CD8-positive, alpha-beta T cell (primary cell): ENCODE measurements at regions of chr9 and their contacts with region 1.

Region 1: GRCh38 chr9:91150998-91151717 is 210.6 kb downstream of the AUH start:
- DNase-seq: peak in 4 of 9 experiments; percentile 37 to 92 (median 66)
- ATAC-seq: peak; percentile 92
- H3K4me3 ChIP-seq: no peak overlapping the region
- H3K4me3 Mint-ChIP-seq: peak overlapping the region; percentile 23
- H3K27ac ChIP-seq: peak overlapping the region in 1 of 2 experiments; percentile 73
- H3K27ac Mint-ChIP-seq: peak overlapping the region; percentile 56
- H3K4me1 ChIP-seq: peaks cover 31% of the 10 kb centered on the region
- H3K4me1 Mint-ChIP-seq: peaks cover 48% of the 10 kb centered on the region
- H3K27me3 ChIP-seq: no peaks in the 10 kb centered on the region
- H3K27me3 Mint-ChIP-seq: no peaks in the 10 kb centered on the region
- CTCF ChIP-seq: no peak

Region 2: DNA sequence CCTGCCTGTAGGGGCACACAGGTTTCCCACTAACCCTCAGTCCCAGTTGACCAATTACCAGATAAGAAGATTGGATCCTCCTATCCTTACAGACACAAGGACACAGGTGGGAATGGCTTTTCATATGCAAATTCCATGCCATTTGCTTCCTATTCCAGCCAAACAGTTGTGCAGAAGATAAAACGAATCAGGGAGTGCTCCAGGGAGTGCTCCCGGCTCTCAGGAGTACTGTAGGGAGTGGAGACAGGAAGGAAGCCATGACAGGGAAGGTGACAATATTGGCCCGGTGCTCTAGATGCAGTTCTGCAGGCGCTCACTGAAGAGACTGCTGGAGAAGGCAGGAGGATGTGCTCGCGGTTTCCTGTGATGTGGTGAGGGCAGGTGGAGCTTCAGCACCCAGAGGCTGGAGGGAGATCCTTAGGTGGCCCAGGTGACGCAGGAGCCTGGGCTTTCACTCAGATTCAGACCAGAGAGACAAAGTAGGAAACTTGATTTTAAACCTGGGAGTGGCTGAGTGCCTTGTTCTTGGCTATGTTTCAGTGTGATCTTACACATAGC is 49.5 kb before region 1 on chr9:
- CTCF ChIA-PET with region 1: no interaction called
- POLR2A ChIA-PET with region 1: no interaction called
- intact Hi-C with region 1: loop called (anchors 1 to 5 kb)
- DNase-seq: peak; percentile 62 to 95 (median 78)
- ATAC-seq: peak; percentile 86
- H3K4me3 ChIP-seq: peak overlapping the region in 1 of 2 experiments; percentile 1
- H3K4me3 Mint-ChIP-seq: peak overlapping the region; percentile 53
- H3K27ac ChIP-seq: no peak overlapping the region
- H3K27ac Mint-ChIP-seq: peak overlapping the region; percentile 74
- H3K4me1 ChIP-seq: peaks cover 35% of the 10 kb centered on the region
- H3K4me1 Mint-ChIP-seq: peaks cover 37% of the 10 kb centered on the region
- H3K27me3 ChIP-seq: no peaks in the 10 kb centered on the region
- H3K27me3 Mint-ChIP-seq: no peaks in the 10 kb centered on the region
- CTCF ChIP-seq: no peak